Panc1 (cell line): ENCODE measurements at regions of chr5 and their contacts with region 1.

Region 1: GRCh38 chr5:10695055-10695649 is 65.9 kb downstream of the DAP start:
- DNase-seq: peak; percentile 52
- ATAC-seq: peak; percentile 95
- H3K4me3 ChIP-seq: no peak overlapping the region
- H3K27ac ChIP-seq: peak overlapping the region; percentile 37; the same call in 1 of the 2 replicates
- H3K4me1 ChIP-seq: peaks cover 8% of the 10 kb centered on the region
- H3K27me3 ChIP-seq: no peaks in the 10 kb centered on the region
- CTCF ChIP-seq: peak; percentile 94

Region 2: GRCh38 chr5:10863763-10864383 is 168.7 kb after region 1 on chr5:
- CTCF ChIA-PET with region 1: no interaction called
- POLR2A ChIA-PET with region 1: no interaction called
- in situ Hi-C with region 1: no loop called
- intact Hi-C with region 1: loop called (anchors 10 kb)
- DNase-seq: peak; percentile 32
- ATAC-seq: peak; percentile 79
- H3K4me3 ChIP-seq: no peak overlapping the region
- H3K27ac ChIP-seq: no peak overlapping the region
- H3K4me1 ChIP-seq: no peaks in the 10 kb centered on the region
- H3K27me3 ChIP-seq: no peaks in the 10 kb centered on the region; the same call in 1 of the 2 replicates
- CTCF ChIP-seq: peak; percentile 94

Region 3: DNA sequence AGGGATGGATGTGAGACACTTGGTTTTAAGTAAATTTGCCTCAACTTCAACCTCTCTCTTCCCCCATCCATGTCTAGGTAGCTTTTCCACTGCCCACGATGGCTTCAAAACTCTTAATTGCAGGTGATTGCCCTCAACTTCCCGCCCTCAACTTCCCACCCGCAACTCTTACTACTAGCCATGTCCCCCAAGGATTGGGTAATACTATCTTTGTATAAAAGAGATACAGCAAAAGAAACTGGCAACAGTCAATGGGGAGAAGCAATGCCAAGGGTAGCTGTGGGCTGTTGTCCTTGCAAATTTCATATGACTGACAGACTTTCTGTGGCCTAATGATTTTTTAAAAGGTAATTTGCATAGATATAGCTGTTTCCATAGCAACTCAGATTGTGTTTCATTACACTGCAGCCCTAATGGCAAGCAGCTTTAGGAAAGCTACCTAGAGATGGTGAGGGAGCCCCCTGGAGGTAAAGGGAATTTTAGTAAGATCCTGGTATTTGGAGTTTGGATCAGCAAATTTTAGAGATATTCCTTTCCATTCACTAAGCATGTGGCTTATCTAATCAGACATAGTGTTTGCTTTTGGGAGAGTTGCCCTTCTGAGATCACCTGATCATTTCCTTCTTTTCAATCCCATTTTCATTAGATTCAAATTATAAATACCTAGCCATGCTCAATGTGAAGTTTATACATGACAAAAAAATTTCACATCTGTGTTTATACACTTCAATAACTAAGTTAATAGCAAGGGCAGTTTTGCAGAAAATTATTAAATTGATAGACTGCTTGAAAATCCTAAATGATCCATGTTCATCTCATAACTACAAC is 487.5 kb after region 1 on chr5:
- CTCF ChIA-PET with region 1: no interaction called
- POLR2A ChIA-PET with region 1: no interaction called
- in situ Hi-C with region 1: no loop called
- intact Hi-C with region 1: loop called (anchors 5 kb)
- DNase-seq: peak; percentile 12
- ATAC-seq: peak; percentile 74
- H3K4me3 ChIP-seq: no peak overlapping the region
- H3K27ac ChIP-seq: no peak overlapping the region
- H3K4me1 ChIP-seq: no peaks in the 10 kb centered on the region
- H3K27me3 ChIP-seq: peaks cover 7% of the 10 kb centered on the region
- CTCF ChIP-seq: peak; percentile 71

Region 4: GRCh38 chr5:12023614-12024241 is 1328.6 kb after region 1 on chr5:
- CTCF ChIA-PET with region 1: no interaction called
- POLR2A ChIA-PET with region 1: no interaction called
- in situ Hi-C with region 1: no loop called
- intact Hi-C with region 1: loop called (anchors 5 kb)
- DNase-seq: peak; percentile 28
- ATAC-seq: no peak
- H3K4me3 ChIP-seq: no peak overlapping the region
- H3K27ac ChIP-seq: no peak overlapping the region
- H3K4me1 ChIP-seq: no peaks in the 10 kb centered on the region
- H3K27me3 ChIP-seq: no peaks in the 10 kb centered on the region
- CTCF ChIP-seq: peak; percentile 68; the same call in 1 of the 2 replicates